H1 (cell line): ENCODE measurements at regions of chr1 and their contacts with region 1.

Region 1: DNA sequence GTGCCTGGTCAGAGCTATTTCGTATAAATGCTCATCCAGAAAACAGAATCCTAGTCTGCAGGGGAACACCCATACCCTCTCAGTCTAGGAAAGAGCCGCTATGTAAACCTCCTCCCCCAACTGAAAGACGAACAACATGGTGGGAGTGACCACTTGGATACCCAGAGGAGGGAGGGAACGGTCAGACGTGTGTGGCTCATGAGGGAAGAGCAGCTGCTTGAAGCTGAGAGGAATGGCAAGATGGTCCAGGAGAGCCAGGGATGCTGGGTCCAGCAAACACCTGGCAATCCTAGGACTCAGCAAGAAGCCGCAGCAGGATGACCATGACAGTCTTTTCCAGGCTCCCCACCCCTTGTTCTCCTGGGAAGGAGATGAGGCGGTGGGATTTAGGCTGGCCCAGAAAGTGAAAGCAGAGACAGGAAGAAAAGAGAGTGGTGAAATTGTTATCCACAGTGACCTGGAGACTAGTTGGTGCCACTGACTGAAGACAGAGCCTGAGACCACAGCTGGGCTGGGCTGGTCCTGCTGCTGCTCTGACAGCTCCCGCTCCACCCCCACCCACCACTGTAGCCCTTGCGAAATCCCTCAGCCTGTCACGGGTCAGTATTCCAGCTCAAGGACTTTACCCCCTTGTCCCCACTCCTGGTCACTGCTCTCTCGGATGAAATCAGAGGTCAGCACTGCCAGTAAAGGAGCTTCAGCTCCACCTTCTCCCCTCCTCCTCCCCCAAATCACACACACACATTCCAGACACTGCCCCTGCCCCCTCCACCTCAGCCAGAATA is 3.6 kb downstream of the CERS2 start:
- DNase-seq: no peak
- H3K4me3 ChIP-seq: peak overlapping the region in 1 of 4 experiments; percentile 91; a peak in 3 of 8 replicates
- H3K27ac ChIP-seq: no peak overlapping the region
- H3K4me1 ChIP-seq: peaks cover 15 to 36% (median 24%) of the 10 kb centered on the region in 4 experiments
- H3K27me3 ChIP-seq: no peaks in the 10 kb centered on the region
- CTCF ChIP-seq: no peak
- EP300 ChIP-seq: no peak
- POLR2A ChIP-seq: no peak
- RAD21 ChIP-seq: no peak

Region 2: GRCh38 chr1:150955280-150955679 is 15.7 kb before region 1 on chr1:
- CTCF ChIA-PET with region 1: interaction called, 12 read pairs
- POLR2A ChIA-PET with region 1: interaction called, 126 read pairs
- DNase-seq: no peak
- H3K4me3 ChIP-seq: no peak overlapping the region
- H3K27ac ChIP-seq: no peak overlapping the region
- H3K4me1 ChIP-seq: no peaks in the 10 kb centered on the region
- H3K27me3 ChIP-seq: no peaks in the 10 kb centered on the region
- CTCF ChIP-seq: no peak
- EP300 ChIP-seq: no peak
- POLR2A ChIP-seq: no peak
- RAD21 ChIP-seq: no peak

Region 3: DNA sequence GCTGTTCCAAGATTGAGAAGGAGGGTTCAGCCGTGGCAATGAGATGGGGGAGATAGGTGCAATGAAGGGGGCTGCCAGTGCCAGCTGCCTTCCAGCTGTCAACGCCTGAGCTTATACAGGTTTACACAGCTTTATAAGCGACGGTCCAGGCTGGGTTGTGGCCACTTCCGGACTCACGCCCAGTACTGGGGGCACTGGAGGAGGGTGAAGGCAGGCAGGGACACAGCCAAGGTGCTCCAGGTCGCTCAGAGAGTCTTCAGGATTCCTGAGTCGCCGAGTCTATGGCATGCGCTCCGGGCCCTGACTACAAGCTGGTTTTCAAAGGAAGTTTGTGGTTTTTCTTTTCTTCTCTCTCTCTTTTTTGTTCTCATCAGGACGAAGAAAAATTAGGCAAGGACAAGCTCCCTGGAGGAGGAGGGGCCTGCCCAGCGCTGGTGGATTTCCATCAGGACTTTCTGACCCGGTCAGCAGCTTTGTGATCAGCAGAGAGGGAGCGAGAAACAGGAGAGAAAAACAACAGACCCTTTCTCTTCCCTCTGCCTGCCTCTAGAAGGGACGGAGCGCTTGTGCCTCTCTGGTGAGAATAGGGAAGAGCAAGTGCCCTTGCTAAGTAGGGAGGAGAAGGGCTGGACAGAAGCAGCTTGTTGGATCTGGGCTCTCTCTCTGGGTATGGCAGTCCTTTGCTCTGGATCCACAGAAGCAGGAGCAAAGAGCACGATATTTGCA is 35.5 kb after region 1 on chr1 and contains the start of gene MINDY1:
- CTCF ChIA-PET with region 1: interaction called, 142 read pairs
- POLR2A ChIA-PET with region 1: interaction called, 7 read pairs
- DNase-seq: peak; percentile 33 to 67
- H3K4me3 ChIP-seq: peak within 1 kb of the TSS; percentile 6 to 94 (median 41); a peak in 7 of 8 replicates
- H3K27ac ChIP-seq: peak within 1 kb of the TSS; percentile 53
- H3K4me1 ChIP-seq: peaks cover 9 to 12% (median 9%) of the 10 kb centered on the region in 4 experiments; a peak in 6 of 7 replicates
- H3K27me3 ChIP-seq: no peaks in the 10 kb centered on the region
- CTCF ChIP-seq: peak; percentile 53 to 70 (median 62)
- EP300 ChIP-seq: no peak
- POLR2A ChIP-seq: peak; percentile 43 to 84
- RAD21 ChIP-seq: peak; percentile 59 to 66
- total RNA-seq, gene MINDY1: 10.6 and 11.4 TPM in 2 replicates

Region 4: GRCh38 chr1:151036363-151036762 is 65.4 kb after region 1 on chr1 and contains the start of gene BNIPL:
- CTCF ChIA-PET with region 1: no interaction called
- POLR2A ChIA-PET with region 1: no interaction called
- DNase-seq: no peak
- H3K4me3 ChIP-seq: peak within 1 kb of the TSS in 2 of 4 experiments; percentile 12 to 41; a peak in 3 of 8 replicates
- H3K27ac ChIP-seq: no peak within 1 kb of the TSS
- H3K4me1 ChIP-seq: peaks cover 0 to 3% (median 0%) of the 10 kb centered on the region in 4 experiments; a peak in 3 of 7 replicates
- H3K27me3 ChIP-seq: no peaks in the 10 kb centered on the region
- CTCF ChIP-seq: no peak
- EP300 ChIP-seq: no peak
- POLR2A ChIP-seq: no peak
- RAD21 ChIP-seq: no peak
- total RNA-seq, gene BNIPL: 2.3 and 2.4 TPM in 2 replicates